Heart left ventricle (tissue), 16 donors: ENCODE measurements at regions of chr2 and their contacts with region 1.

Region 1: DNA sequence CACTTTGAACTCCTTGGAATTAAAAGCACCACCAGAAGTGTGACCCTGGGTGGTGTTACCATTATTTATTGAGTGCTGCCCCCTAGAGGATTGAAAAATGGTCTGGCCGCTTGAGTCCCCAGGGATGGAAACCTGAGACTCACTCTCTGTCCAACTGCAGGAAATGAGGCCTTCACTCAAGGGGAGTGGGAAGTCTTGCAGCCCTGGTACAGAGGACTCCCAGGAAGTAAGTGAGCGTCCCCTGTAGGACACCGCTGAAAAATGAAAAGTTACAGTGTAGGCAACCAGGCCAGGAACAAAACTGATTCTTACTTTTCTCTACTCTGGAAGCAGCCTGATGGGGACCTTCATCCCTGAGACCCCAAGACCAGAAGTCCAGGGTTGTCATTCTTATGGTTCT is 2.2 kb upstream of the NRP2 start:
- DNase-seq: peak in 3 of 5 donors; percentile 42 to 63 (median 49)
- ATAC-seq: peak in 3 of 4 donors; percentile 38 to 61 (median 57)
- H3K4me3 ChIP-seq: no peak overlapping the region
- H3K27ac ChIP-seq: peak overlapping the region in 1 of 12 donors; percentile 93
- H3K4me1 ChIP-seq: peaks cover 0 to 33% (median 16%) of the 10 kb centered on the region in 12 donors
- H3K27me3 ChIP-seq: peaks cover 0 to 33% (median 7%) of the 10 kb centered on the region in 9 donors
- CTCF ChIP-seq: peak; percentile 40 to 73 (median 66)
- POLR2A ChIP-seq: no peak

Region 2: DNA sequence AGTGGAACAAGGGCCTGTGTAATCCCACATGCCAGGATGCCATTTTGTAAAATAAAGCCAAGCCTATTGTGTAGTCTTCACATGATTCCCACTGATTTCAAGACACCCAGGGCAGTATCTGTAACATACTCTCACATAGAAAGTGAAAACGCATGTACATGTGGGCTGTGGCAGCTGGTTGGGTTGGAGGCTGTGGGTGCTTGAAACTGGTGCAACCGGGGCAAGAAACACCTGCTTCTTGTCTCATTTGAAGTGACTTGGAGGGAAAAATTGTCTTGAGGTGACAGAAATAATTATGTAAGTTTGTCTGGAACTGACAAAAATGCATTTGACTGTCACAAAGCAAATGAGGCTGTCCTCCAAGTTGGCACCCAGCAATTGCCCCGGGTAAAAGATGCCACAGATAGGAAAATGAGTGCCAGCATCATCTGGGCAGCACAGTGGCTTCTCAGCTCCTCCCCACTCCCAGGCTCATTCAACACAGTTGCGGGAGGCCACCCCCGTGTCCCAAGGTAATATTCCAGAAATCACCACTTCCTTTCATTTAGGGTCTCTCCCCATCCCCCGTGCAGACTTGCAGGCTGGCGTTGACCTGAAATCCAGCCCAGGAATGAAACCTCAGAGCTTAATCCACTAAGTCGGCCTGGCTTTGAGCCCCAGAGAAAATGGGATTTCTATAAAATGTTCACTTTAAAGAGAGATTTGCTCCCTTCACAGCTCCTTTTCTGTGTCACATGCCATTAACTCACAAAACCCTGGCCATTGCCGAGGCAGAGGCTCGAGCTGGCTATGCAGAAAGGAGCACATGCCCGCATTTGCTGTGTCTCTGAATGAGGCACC is 1428.7 kb before region 1 on chr2:
- intact Hi-C with region 1: loop called in 1 of 10 experiments (anchors 5 kb)
- DNase-seq: no peak
- ATAC-seq: no peak
- H3K4me3 ChIP-seq: no peak overlapping the region
- H3K27ac ChIP-seq: no peak overlapping the region
- H3K4me1 ChIP-seq: peaks cover 0 to 3% (median 0%) of the 10 kb centered on the region in 12 donors
- H3K27me3 ChIP-seq: no peaks in the 10 kb centered on the region
- CTCF ChIP-seq: no peak
- POLR2A ChIP-seq: no peak

Region 3: DNA sequence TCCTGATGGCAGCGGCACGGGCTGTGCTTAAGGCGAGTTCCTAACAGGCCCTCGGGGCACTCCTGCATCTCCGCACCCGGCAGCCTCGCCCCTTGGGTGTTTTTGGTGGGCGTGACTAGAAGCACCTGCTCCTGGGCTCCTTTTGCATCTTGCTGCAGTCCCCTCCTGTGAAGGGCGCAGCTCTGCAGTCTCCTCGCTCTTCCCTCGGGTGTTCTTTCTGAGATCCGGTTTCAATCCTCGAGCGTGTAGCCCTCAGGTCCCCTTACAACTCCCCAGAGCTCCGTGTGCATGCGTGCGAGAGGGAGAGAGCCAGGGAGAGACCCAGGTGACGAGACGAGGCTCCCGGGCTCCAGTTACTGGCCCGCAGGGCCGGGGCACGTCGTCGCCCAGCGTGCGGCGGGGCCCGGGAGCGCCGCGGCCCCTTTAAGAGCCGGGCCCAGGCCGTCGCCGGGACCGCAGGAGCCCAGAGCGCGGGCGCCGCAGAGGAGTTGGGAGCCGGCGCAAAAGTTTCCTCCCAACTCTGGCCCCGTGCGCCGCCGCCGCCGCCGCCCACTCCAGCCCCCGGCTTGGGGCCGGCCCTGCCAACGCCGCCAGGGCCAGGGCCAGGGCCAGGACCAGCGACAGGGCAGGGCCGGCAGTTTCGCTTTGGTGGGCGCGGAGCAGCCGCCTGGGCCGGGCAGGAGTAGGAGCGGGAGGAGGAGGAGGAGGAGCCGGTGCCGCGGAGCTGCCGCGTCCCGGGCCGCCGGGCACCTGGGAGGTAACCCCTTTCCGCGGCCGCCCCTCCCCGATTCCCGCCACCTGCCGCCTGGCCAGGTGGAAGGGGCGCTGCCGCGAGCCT is 1134.8 kb before region 1 on chr2 and contains the start of gene PARD3B:
- intact Hi-C with region 1: loop called in 1 of 10 experiments (anchors 10 kb)
- DNase-seq: peak; percentile 49 to 81 (median 63)
- ATAC-seq: peak; percentile 82 to 98 (median 94)
- H3K4me3 ChIP-seq: peak within 1 kb of the TSS; percentile 65 to 99 (median 92)
- H3K27ac ChIP-seq: peak within 1 kb of the TSS; percentile 29 to 87 (median 72)
- H3K4me1 ChIP-seq: peaks cover 0 to 26% (median 15%) of the 10 kb centered on the region in 12 donors
- H3K27me3 ChIP-seq: peaks cover 0 to 10% (median 0%) of the 10 kb centered on the region in 9 donors
- CTCF ChIP-seq: peak in 1 of 12 donors; percentile 3
- POLR2A ChIP-seq: peak in 1 of 2 donors; percentile 25
- total RNA-seq, gene PARD3B: 4.6 to 15.1 (median 6.5) TPM

Region 4: GRCh38 chr2:204749319-204749718 is 930.7 kb before region 1 on chr2:
- intact Hi-C with region 1: no loop called
- DNase-seq: no peak
- ATAC-seq: no peak
- H3K4me3 ChIP-seq: no peak overlapping the region
- H3K27ac ChIP-seq: no peak overlapping the region
- H3K4me1 ChIP-seq: peaks cover 0 to 6% (median 0%) of the 10 kb centered on the region in 12 donors
- H3K27me3 ChIP-seq: no peaks in the 10 kb centered on the region
- CTCF ChIP-seq: no peak
- POLR2A ChIP-seq: no peak

Region 5: DNA sequence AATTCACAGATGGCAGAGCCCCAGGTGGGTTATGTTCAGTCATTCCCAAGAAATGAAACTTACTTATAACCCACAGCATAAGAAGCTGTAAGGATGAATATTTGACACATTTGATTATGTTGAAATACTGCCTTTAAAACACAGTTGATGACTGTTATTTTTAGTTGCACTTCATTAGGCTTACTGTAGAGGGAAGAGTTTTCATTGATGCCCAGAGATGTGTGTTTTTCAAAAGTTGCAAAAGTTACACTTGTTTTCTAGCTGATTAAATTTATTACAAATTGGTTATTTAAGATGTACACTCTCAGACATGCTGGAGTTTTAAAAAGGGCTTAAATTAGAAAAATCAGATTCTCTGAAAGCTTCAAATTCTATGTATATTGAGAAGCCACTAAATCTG is 628.6 kb before region 1 on chr2:
- intact Hi-C with region 1: loop called in 1 of 10 experiments (anchors 10 kb)
- DNase-seq: no peak
- ATAC-seq: no peak
- H3K4me3 ChIP-seq: no peak overlapping the region
- H3K27ac ChIP-seq: no peak overlapping the region
- H3K4me1 ChIP-seq: peaks cover 0 to 9% (median 0%) of the 10 kb centered on the region in 12 donors
- H3K27me3 ChIP-seq: no peaks in the 10 kb centered on the region
- CTCF ChIP-seq: peak in 3 of 12 donors; percentile 19 to 21 (median 21)
- POLR2A ChIP-seq: no peak

Region 6: DNA sequence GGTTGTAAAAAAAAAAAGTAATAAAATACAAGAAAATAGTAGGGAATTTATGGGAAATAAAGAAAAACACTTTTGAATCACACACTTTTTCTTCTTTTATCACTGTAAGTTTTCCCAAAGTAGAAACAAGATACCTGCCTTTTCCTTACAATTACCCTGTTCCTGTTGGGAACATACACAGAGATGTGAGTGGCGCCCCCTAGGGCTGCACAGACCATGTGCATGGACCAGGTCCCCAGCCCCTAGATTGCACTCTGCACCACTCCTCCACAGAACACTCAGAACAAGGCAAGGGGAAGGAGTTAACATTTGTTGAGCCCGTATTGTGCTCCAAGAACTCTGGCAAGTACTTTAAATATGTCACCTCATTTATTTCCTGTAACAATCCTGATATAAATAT is 116.4 kb before region 1 on chr2:
- intact Hi-C with region 1: no loop called
- DNase-seq: peak in 2 of 5 donors; percentile 40 to 64
- ATAC-seq: no peak
- H3K4me3 ChIP-seq: no peak overlapping the region
- H3K27ac ChIP-seq: no peak overlapping the region
- H3K4me1 ChIP-seq: no peaks in the 10 kb centered on the region
- H3K27me3 ChIP-seq: no peaks in the 10 kb centered on the region
- CTCF ChIP-seq: peak in 8 of 12 donors; percentile 8 to 47 (median 35)
- POLR2A ChIP-seq: no peak

Region 7: DNA sequence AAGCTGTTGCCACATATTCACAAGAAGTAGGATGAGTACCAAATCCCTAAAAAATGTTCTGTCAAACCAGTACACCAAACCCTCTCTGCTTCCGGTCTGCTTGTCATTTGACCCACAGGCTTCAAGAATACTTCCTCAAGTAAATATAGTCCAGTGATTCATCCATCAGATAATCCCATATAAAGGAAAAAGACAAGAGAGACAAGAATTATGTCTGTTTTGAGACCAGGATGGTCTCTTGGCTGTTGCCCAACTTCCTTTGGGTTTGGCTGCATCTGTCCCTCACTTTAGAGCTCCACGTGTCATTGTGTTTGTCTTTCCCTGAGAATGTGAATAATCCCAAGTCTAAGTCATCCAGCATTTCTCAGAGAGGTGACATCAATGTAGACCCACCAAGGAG is 89.3 kb before region 1 on chr2:
- intact Hi-C with region 1: no loop called
- DNase-seq: no peak
- ATAC-seq: no peak
- H3K4me3 ChIP-seq: no peak overlapping the region
- H3K27ac ChIP-seq: no peak overlapping the region
- H3K4me1 ChIP-seq: peaks cover 0 to 11% (median 0%) of the 10 kb centered on the region in 12 donors
- H3K27me3 ChIP-seq: no peaks in the 10 kb centered on the region
- CTCF ChIP-seq: no peak
- POLR2A ChIP-seq: no peak

Region 8: GRCh38 chr2:205706769-205707381 is 26.8 kb after region 1 on chr2:
- intact Hi-C with region 1: loop called in 1 of 10 experiments (anchors 2 kb)
- DNase-seq: peak; percentile 68 to 83 (median 80)
- ATAC-seq: peak; percentile 51 to 90 (median 88)
- H3K4me3 ChIP-seq: peak overlapping the region in 1 of 12 donors; percentile 5
- H3K27ac ChIP-seq: peak overlapping the region in 11 of 12 donors; percentile 51 to 93 (median 79)
- H3K4me1 ChIP-seq: peaks cover 0 to 78% (median 65%) of the 10 kb centered on the region in 12 donors
- H3K27me3 ChIP-seq: no peaks in the 10 kb centered on the region
- CTCF ChIP-seq: no peak
- POLR2A ChIP-seq: no peak

Region 9: GRCh38 chr2:205925373-205926337 is 245.6 kb after region 1 on chr2:
- intact Hi-C with region 1: loop called in 2 of 10 experiments (anchors 5 to 10 kb)
- DNase-seq: peak; percentile 68 to 91 (median 77)
- ATAC-seq: peak; percentile 76 to 94 (median 90)
- H3K4me3 ChIP-seq: peak overlapping the region in 8 of 12 donors; percentile 6 to 44 (median 20)
- H3K27ac ChIP-seq: peak overlapping the region in 1 of 12 donors; percentile 28
- H3K4me1 ChIP-seq: peaks cover 0 to 20% (median 5%) of the 10 kb centered on the region in 12 donors
- H3K27me3 ChIP-seq: peaks cover 0 to 31% (median 0%) of the 10 kb centered on the region in 9 donors
- CTCF ChIP-seq: peak; percentile 83 to 98 (median 92)
- POLR2A ChIP-seq: no peak